Posterior vena cava (tissue), 2 donors: ENCODE measurements at regions of chr12 and their contacts with region 1.

Region 1: GRCh38 chr12:53213348-53213747 is 6.3 kb upstream of the ITGB7 start:
- DNase-seq: peak; percentile 95

Region 2: DNA sequence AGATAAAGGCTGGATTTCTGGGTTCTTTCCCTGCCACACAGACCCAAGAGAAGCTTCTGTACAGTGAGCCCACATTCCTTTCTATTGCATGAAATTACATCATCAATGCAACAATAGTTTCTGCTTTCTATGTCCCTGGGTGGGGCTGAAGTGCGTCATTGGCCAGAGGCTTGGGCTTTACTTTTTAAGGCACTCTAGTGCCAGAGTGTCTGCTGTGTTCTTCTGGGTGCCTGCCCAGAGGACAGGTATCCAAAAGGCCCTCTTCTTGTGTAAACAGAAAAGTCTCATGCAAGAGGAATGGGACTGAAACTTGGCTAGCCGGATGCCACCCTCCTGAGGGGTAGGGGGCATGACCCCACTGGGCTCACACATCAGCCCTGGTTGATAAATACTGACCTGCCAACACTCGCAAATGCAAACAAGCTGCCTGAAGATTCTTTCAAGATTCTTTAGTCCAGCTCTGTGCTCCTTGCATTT is 933.0 kb before region 1 on chr12:
- intact Hi-C with region 1: loop called in 1 of 2 experiments (anchors 5 kb)
- DNase-seq: peak; percentile 89

Region 3: GRCh38 chr12:53179687-53180219 is 33.6 kb before region 1 on chr12:
- intact Hi-C with region 1: no loop called
- DNase-seq: no peak

Region 4: DNA sequence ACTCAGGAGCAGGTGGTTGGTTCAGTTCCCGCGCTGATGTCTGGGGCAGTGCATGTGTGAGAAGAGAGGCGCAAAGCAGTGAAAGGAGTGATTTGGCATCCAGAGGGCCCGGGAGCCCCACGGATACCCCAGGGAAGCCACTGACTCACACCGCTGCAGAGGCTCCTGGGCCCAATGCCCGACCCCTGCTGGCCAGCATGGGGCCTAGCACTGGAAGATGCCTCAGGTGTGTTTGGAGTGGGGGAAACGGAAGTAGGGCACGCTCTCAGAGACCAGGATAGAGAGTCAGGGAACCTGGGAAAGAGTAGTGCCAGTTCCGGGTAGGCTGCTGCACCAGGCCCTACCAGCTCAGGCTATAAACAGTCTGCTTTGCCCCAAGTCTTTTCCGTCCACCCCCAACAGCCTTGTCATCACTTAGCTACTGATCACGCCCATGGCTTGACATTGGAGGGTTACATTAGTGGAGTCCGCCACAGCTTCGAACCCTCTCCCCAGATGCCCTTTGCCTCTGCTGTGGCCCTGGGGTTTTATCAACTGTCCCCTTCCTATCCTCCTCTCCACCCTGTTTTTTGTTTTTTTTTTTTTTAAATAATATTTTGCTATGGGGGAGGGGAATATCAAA is 23.1 kb before region 1 on chr12:
- intact Hi-C with region 1: loop called in 1 of 2 experiments (anchors 2 kb)
- DNase-seq: peak; percentile 90

Region 5: GRCh38 chr12:53251477-53252348 is 38.4 kb after region 1 on chr12:
- intact Hi-C with region 1: loop called in 1 of 2 experiments (anchors 5 kb)
- DNase-seq: peak; percentile 92

Region 6: DNA sequence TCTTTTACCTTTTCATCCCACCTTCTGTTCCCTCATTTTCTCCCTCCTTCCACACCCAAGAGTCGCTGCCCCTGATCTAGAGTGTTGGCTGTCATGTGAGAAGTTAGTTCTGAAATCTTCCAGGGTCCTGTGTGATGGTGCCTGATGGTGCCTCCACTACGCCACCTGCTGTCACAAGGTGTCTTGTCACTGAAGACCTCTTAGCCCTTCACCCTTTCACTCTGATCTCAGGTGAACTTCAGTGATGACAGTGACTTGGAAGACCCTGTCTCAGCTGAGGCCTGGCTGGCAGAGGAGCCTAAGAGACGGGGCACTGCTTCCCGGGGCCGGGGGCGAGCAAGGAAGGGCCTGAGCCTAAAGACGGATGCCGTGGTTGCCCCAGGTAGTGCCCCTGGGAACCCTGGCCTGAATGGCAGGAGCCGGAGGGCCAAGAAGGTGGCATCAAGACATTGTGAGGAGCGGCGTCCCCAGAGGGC is 74.4 kb after region 1 on chr12:
- intact Hi-C with region 1: loop called (anchors 2 kb)
- DNase-seq: peak; percentile 89

Region 7: GRCh38 chr12:53483225-53483978 is 270.1 kb after region 1 on chr12:
- intact Hi-C with region 1: no loop called
- DNase-seq: peak; percentile 68